A673 (cell line): ENCODE measurements at regions of chr13 and their contacts with region 1.

Region 1: GRCh38 chr13:44577236-44578066 is 1.3 kb upstream of the TSC22D1 start:
- DNase-seq: peak; percentile 98
- H3K4me3 ChIP-seq: peak overlapping the region; percentile 91
- H3K27ac ChIP-seq: peak overlapping the region; percentile 94
- H3K4me1 ChIP-seq: peaks cover 27% of the 10 kb centered on the region
- H3K27me3 ChIP-seq: no peaks in the 10 kb centered on the region
- CTCF ChIP-seq: no peak

Region 2: GRCh38 chr13:44508562-44509077 is 68.8 kb before region 1 on chr13:
- CTCF ChIA-PET with region 1: no interaction called
- POLR2A ChIA-PET with region 1: interaction called, 15 read pairs
- intact Hi-C with region 1: no loop called
- DNase-seq: no peak
- H3K4me3 ChIP-seq: no peak overlapping the region
- H3K27ac ChIP-seq: no peak overlapping the region
- H3K4me1 ChIP-seq: no peaks in the 10 kb centered on the region
- H3K27me3 ChIP-seq: no peaks in the 10 kb centered on the region
- CTCF ChIP-seq: no peak

Region 3: GRCh38 chr13:44917589-44918325 is 340.3 kb after region 1 on chr13:
- CTCF ChIA-PET with region 1: interaction called, 3 read pairs
- POLR2A ChIA-PET with region 1: no interaction called
- intact Hi-C with region 1: loop called (anchors 2 kb)
- DNase-seq: peak; percentile 97
- H3K4me3 ChIP-seq: peak overlapping the region; percentile 53
- H3K27ac ChIP-seq: peak overlapping the region; percentile 90
- H3K4me1 ChIP-seq: peaks cover 15% of the 10 kb centered on the region
- H3K27me3 ChIP-seq: no peaks in the 10 kb centered on the region
- CTCF ChIP-seq: peak; percentile 38; the same call in 1 of the 2 replicates